ENCODE measurements at regions of chr6 and their contacts with region 1.

Region 1: DNA sequence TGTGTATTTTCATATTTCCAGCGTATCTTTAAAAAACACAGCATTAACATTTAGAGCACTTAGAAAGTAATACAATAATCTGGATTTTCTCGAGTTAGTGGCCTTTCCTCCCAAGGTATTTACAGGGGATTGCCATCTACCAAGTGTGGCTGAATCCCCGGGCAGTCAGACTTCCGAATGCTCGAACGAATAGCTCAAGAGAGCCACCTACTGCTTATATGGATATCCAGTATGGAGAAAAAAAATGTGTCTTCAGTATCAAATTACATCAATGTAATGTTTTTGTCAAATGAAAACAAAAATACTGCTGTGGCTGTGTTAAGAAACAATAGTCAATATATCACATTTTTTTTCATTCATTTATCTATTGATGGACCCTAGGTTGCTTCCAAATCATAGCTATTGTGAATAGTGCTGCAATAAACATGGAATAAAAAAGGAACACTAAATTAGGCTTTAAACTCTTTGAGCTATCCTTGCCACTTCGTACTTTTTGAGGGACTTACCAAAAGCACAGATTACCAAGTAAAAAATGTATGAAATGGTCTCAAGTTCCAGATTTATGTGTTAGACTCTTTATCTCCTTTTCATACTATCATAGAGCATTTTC is 654.5 kb upstream of the PTCHD4 start:
- DNase-seq: no peak
- ATAC-seq: no peak

Region 2: DNA sequence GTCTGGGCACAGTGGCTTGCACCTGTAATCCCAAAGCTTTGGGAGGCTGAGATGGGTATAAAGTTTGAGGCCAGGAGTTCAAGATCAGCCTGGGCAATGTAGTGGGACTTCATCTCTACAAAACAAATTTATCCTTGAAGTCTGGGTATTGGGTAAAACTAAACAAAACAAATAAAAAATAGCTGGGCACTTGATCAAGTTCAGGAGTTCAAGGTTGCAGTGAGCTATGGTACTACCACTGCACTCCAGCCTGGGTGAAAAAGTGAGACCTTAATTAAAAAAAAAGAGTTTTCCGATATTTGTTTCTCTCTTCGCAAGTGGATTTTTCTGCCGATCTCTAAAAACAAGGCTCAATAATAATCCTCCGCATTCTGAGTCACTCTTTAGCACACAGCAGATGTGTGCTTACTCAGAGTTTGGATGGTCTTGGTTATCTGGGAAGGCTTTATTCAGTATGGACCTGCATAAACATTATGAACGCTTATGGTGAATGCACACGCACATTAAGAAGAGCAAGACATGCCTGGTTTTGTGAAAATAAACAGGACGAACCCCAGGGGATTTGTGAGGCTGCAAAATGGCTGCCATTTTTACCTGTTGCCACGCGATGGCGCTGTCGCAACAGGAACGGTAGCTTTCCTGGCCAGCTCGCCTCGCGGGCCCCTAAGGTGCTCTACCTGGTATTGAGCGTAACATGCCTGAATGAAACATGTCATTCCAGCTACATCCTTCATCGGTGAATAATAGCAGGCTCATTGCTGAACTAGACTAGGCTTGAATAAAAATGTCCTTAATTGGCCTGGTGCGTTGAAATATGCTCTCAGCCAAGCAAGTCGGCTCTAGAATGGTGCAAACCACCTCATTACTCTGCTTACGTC is 977.6 kb before region 1 on chr6:
- intact Hi-C with region 1: loop called (anchors 5 kb)
- DNase-seq: peak; percentile 71
- ATAC-seq: no peak

Region 3: GRCh38 chr6:48736501-48737206 is 28.8 kb before region 1 on chr6:
- intact Hi-C with region 1: no loop called
- DNase-seq: no peak
- ATAC-seq: no peak